ENCODE measurements at regions of chr1 and their contacts with region 1.

Region 1: GRCh38 chr1:50605186-50605875 is 182.1 kb upstream of the DMRTA2 start:
- DNase-seq: no peak
- H3K4me3 ChIP-seq: no peak overlapping the region
- H3K27ac ChIP-seq: no peak overlapping the region
- H3K4me1 ChIP-seq: no peaks in the 10 kb centered on the region
- H3K27me3 ChIP-seq: no peaks in the 10 kb centered on the region
- CTCF ChIP-seq: peak; percentile 72

Region 2: GRCh38 chr1:50368179-50369012 is 236.9 kb before region 1 on chr1:
- CTCF ChIA-PET with region 1: no interaction called
- POLR2A ChIA-PET with region 1: no interaction called
- intact Hi-C with region 1: loop called (anchors 1 kb)
- DNase-seq: peak in 1 of 2 experiments; percentile 23
- H3K4me3 ChIP-seq: no peak overlapping the region
- H3K27ac ChIP-seq: no peak overlapping the region
- H3K4me1 ChIP-seq: no peaks in the 10 kb centered on the region
- H3K27me3 ChIP-seq: peaks cover 6% of the 10 kb centered on the region; the same call in 1 of the 2 replicates
- CTCF ChIP-seq: peak; percentile 83

Region 3: GRCh38 chr1:50620680-50621329 is 15.5 kb after region 1 on chr1:
- CTCF ChIA-PET with region 1: interaction called, 10 read pairs
- POLR2A ChIA-PET with region 1: no interaction called
- intact Hi-C with region 1: no loop called
- DNase-seq: peak; percentile 83 to 95
- H3K4me3 ChIP-seq: no peak overlapping the region
- H3K27ac ChIP-seq: peak overlapping the region; percentile 62
- H3K4me1 ChIP-seq: no peaks in the 10 kb centered on the region
- H3K27me3 ChIP-seq: no peaks in the 10 kb centered on the region
- CTCF ChIP-seq: peak; percentile 67